IMR-90 (cell line): ENCODE measurements at regions of chr16 and their contacts with region 1.

Region 1: GRCh38 chr16:73956587-73957494 is 339.8 kb upstream of the PSMD7 start:
- DNase-seq: peak; percentile 64
- ATAC-seq: peak; percentile 92
- H3K4me3 ChIP-seq: no peak overlapping the region
- H3K27ac ChIP-seq: no peak overlapping the region
- H3K4me1 ChIP-seq: no peaks in the 10 kb centered on the region
- H3K27me3 ChIP-seq: no peaks in the 10 kb centered on the region
- CTCF ChIP-seq: peak; percentile 74
- POLR2A ChIP-seq: no peak
- RAD21 ChIP-seq: peak; percentile 73

Region 2: DNA sequence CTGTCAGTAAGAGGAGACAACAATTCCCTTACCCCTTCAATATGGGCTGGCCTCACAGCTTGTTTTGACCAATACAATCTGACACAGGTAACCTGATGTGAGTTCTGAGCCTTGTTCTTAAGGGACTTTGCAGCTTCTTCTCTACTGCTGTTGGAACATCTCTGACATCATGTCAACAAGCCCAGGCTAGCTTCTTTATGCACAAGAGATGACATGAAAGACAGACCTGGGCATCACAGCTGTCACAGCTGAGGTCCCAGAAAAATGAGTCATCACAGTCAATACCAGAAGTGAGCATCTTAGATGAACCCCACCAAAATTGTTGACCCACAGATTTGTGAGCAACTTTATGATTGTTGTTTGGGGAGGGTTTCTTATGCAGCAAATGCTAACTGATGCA is 92.0 kb before region 1 on chr16:
- CTCF ChIA-PET with region 1: no interaction called
- POLR2A ChIA-PET with region 1: no interaction called
- dilution Hi-C with region 1: no loop called
- in situ Hi-C with region 1: no loop called
- intact Hi-C with region 1: no loop called
- DNase-seq: no peak
- ATAC-seq: no peak
- H3K4me3 ChIP-seq: no peak overlapping the region
- H3K27ac ChIP-seq: no peak overlapping the region
- H3K4me1 ChIP-seq: no peaks in the 10 kb centered on the region
- H3K27me3 ChIP-seq: no peaks in the 10 kb centered on the region
- CTCF ChIP-seq: no peak
- POLR2A ChIP-seq: no peak
- RAD21 ChIP-seq: no peak

Region 3: GRCh38 chr16:73996624-73997339 is 39.9 kb after region 1 on chr16:
- CTCF ChIA-PET with region 1: no interaction called
- POLR2A ChIA-PET with region 1: no interaction called
- dilution Hi-C with region 1: no loop called
- in situ Hi-C with region 1: no loop called
- intact Hi-C with region 1: no loop called
- DNase-seq: no peak
- ATAC-seq: no peak
- H3K4me3 ChIP-seq: no peak overlapping the region
- H3K27ac ChIP-seq: no peak overlapping the region
- H3K4me1 ChIP-seq: no peaks in the 10 kb centered on the region
- H3K27me3 ChIP-seq: no peaks in the 10 kb centered on the region
- CTCF ChIP-seq: no peak
- POLR2A ChIP-seq: no peak
- RAD21 ChIP-seq: no peak

Region 4: DNA sequence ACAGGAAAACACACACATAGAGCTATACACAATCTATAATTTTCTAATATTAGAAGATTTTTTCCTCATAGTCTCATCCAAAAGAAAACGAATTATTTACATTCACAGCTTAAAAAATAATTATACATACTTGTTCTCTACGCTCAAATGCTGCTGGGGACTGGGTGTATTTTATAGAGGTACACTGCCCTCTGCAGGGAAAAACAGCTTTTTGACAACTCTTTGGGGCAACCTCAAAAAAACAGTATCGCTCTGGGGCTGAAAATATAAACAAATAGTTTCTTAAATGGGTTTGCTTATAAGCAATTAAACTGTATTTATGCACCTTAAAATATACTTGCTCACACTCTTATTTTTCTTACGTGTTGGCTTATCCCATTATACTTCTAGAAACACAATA is 78.0 kb after region 1 on chr16:
- CTCF ChIA-PET with region 1: no interaction called
- POLR2A ChIA-PET with region 1: no interaction called
- dilution Hi-C with region 1: no loop called
- in situ Hi-C with region 1: no loop called
- intact Hi-C with region 1: no loop called
- DNase-seq: peak; percentile 11
- ATAC-seq: peak; percentile 56; the same call in 1 of the 2 replicates
- H3K4me3 ChIP-seq: no peak overlapping the region
- H3K27ac ChIP-seq: no peak overlapping the region
- H3K4me1 ChIP-seq: no peaks in the 10 kb centered on the region
- H3K27me3 ChIP-seq: no peaks in the 10 kb centered on the region; the same call in 1 of the 2 replicates
- CTCF ChIP-seq: 0 out of 2 replicates have a peak, but pooled peaks have one; percentile 29
- POLR2A ChIP-seq: no peak
- RAD21 ChIP-seq: peak; percentile 37

Region 5: DNA sequence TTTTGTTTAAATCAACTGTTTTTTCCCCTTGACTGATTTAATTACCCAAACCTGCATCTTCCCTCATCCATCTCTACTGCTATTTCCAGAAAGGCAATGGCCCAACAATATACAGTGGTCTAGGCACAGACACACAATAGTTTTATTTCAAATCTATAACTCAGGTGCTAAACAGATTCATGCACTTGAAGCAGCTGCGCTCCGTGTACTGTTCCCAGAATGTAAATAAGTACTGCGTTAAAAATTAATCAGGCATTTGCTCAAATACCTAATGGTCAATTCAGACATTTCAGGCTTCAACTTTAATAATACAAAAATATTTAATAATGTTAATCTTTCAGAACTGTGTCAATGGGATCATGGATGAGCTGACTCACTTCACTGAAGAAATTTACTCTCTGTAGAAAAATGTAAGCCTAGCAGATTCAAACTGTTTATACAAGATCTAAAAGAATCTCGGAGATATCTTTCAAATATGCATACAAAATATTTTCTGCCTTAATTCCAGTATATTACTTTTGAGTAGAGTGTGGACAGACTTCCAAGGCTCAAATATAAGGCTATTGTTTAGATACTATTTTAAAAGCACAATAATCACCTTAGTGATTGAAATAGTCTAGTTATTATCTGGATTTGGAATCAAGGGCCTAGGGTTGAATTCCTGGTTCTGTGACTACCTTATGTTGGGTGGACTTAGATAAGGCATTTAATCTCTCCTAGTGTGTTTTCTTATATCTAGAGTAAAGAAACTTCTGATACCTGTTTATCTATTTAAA is 242.4 kb after region 1 on chr16:
- CTCF ChIA-PET with region 1: no interaction called
- POLR2A ChIA-PET with region 1: no interaction called
- dilution Hi-C with region 1: no loop called
- in situ Hi-C with region 1: no loop called
- intact Hi-C with region 1: no loop called
- DNase-seq: peak; percentile 4
- ATAC-seq: peak; percentile 93
- H3K4me3 ChIP-seq: no peak overlapping the region
- H3K27ac ChIP-seq: no peak overlapping the region
- H3K4me1 ChIP-seq: peaks cover 1% of the 10 kb centered on the region; the same call in 1 of the 2 replicates
- H3K27me3 ChIP-seq: no peaks in the 10 kb centered on the region
- CTCF ChIP-seq: no peak
- POLR2A ChIP-seq: no peak
- RAD21 ChIP-seq: no peak

Region 6: DNA sequence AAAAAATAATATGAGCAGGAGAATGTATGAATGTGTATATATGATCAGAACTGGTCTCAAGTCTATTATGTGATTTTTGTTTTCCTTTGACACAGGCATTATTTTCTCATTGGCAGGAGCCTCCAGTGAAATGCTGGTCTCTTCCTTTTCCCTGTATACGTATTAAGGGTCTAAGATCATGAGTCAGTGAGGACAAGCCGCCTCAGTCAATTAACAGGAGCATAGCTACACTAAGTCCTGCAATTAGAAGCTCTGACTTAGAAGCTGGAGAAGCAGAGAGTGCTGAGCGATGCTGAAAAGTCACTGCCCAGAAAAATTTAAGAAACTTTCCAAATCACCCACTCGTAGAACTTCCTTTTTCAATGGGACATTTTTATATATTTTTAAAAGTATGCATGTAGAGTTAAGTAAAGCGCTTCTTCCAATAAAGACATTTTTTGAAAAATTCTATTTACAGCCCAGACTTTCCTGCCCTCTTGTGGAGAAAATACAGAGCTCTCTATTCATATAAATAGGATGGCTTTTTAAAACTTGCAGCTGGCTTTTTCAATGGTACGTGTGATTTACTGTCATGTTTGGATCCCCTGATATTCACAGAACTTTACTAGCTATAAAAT is 269.6 kb after region 1 on chr16:
- CTCF ChIA-PET with region 1: no interaction called
- POLR2A ChIA-PET with region 1: no interaction called
- dilution Hi-C with region 1: no loop called
- in situ Hi-C with region 1: no loop called
- intact Hi-C with region 1: loop called (anchors 1 kb)
- DNase-seq: peak; percentile 31
- ATAC-seq: peak; percentile 57; the same call in 1 of the 2 replicates
- H3K4me3 ChIP-seq: no peak overlapping the region
- H3K27ac ChIP-seq: no peak overlapping the region
- H3K4me1 ChIP-seq: no peaks in the 10 kb centered on the region
- H3K27me3 ChIP-seq: no peaks in the 10 kb centered on the region; the same call in 1 of the 2 replicates
- CTCF ChIP-seq: peak; percentile 47
- POLR2A ChIP-seq: no peak
- RAD21 ChIP-seq: peak; percentile 42

Region 7: GRCh38 chr16:74275002-74275636 is 318.3 kb after region 1 on chr16:
- CTCF ChIA-PET with region 1: interaction called, 3 read pairs
- POLR2A ChIA-PET with region 1: no interaction called
- dilution Hi-C with region 1: no loop called
- in situ Hi-C with region 1: no loop called
- intact Hi-C with region 1: loop called (anchors 2 kb)
- DNase-seq: peak; percentile 28
- ATAC-seq: no peak
- H3K4me3 ChIP-seq: no peak overlapping the region
- H3K27ac ChIP-seq: no peak overlapping the region
- H3K4me1 ChIP-seq: no peaks in the 10 kb centered on the region
- H3K27me3 ChIP-seq: no peaks in the 10 kb centered on the region; the same call in 1 of the 2 replicates
- CTCF ChIP-seq: peak; percentile 62
- POLR2A ChIP-seq: no peak
- RAD21 ChIP-seq: peak; percentile 70